ENCODE measurements at regions of chr6 and their contacts with region 1.

Region 1: GRCh38 chr6:159062564-159062945 is 17.8 kb upstream of the TAGAP start:
- DNase-seq: peak in 7 of 9 donors; percentile 75 to 89 (median 85)
- ATAC-seq: peak; percentile 92
- H3K4me3 ChIP-seq: peak overlapping the region; percentile 14
- H3K4me3 Mint-ChIP-seq: peak overlapping the region; percentile 66 to 84 (median 74)
- H3K27ac ChIP-seq: peak overlapping the region; percentile 79
- H3K27ac Mint-ChIP-seq: peak overlapping the region; percentile 96 to 99 (median 98)
- H3K4me1 ChIP-seq: peaks cover 52 to 54% of the 10 kb centered on the region in 2 donors
- H3K4me1 Mint-ChIP-seq: peaks cover 60 to 88% (median 86%) of the 10 kb centered on the region in 7 donors
- H3K27me3 ChIP-seq: no peaks in the 10 kb centered on the region
- H3K27me3 Mint-ChIP-seq: no peaks in the 10 kb centered on the region

Region 2: DNA sequence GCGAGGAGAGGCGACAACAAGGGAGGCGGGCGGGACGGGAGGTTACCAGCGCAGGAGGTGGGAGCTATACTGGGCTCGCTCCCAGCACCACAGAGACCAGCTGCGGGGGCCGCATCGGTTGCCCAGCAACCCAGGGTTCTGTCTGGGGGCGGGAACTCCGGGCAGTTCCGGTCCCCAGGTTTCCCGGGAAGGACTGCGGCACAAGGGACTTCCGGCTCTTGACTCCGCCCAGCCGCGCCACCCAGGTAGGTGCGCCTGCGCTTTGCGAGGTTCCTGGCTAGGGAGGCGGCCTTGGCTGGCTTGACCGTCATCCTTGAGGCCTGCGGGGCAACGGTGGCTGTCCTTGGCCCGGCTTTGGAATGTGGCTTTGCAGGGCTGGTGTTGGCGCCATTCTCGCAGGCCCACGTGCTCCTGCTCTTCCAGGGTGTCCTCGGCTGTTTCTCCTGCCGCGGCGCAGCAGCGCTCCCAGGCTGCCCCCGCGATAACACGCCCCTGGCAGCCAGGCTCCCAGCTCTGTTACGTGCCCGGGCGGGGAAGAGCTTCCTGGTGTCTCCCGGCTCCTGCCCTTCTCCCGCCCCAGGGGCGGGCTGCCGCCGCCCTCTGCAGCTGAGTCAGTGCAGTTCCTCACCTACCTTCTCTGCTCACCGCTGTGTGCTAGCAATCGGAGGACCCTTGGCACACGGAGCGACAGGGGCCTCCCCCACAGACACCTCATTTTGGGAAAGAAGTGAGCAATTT is 62.7 kb before region 1 on chr6 and contains the start of gene RSPH3:
- CTCF ChIA-PET with region 1: no interaction called
- POLR2A ChIA-PET with region 1: no interaction called
- intact Hi-C with region 1: loop called in 1 of 2 experiments (anchors 2 kb)
- DNase-seq: peak; percentile 64 to 93 (median 81)
- ATAC-seq: peak; percentile 93
- H3K4me3 ChIP-seq: peak within 1 kb of the TSS; percentile 97
- H3K4me3 Mint-ChIP-seq: peak within 1 kb of the TSS; percentile 88 to 99 (median 98)
- H3K27ac ChIP-seq: peak within 1 kb of the TSS; percentile 76
- H3K27ac Mint-ChIP-seq: peak within 1 kb of the TSS; percentile 58 to 95 (median 90)
- H3K4me1 ChIP-seq: peaks cover 7 to 16% of the 10 kb centered on the region in 2 donors
- H3K4me1 Mint-ChIP-seq: peaks cover 16 to 35% (median 26%) of the 10 kb centered on the region in 7 donors
- H3K27me3 ChIP-seq: no peaks in the 10 kb centered on the region
- H3K27me3 Mint-ChIP-seq: no peaks in the 10 kb centered on the region
- total RNA-seq, gene RSPH3: 1.3 to 3.6 (median 2.7) TPM

Region 3: GRCh38 chr6:159074120-159074684 is 11.6 kb after region 1 on chr6:
- CTCF ChIA-PET with region 1: interaction called, 3 read pairs
- POLR2A ChIA-PET with region 1: interaction called, 44 read pairs
- intact Hi-C with region 1: no loop called
- DNase-seq: no peak
- ATAC-seq: no peak
- H3K4me3 ChIP-seq: no peak overlapping the region
- H3K4me3 Mint-ChIP-seq: no peak overlapping the region
- H3K27ac ChIP-seq: no peak overlapping the region
- H3K27ac Mint-ChIP-seq: no peak overlapping the region
- H3K4me1 ChIP-seq: peaks cover 0 to 10% of the 10 kb centered on the region in 2 donors
- H3K4me1 Mint-ChIP-seq: peaks cover 13 to 30% (median 20%) of the 10 kb centered on the region in 7 donors
- H3K27me3 ChIP-seq: no peaks in the 10 kb centered on the region
- H3K27me3 Mint-ChIP-seq: peaks cover 0 to 9% (median 0%) of the 10 kb centered on the region in 5 donors

Region 4: GRCh38 chr6:159080217-159080976 is 17.8 kb after region 1 on chr6:
- CTCF ChIA-PET with region 1: interaction called, 3 read pairs
- POLR2A ChIA-PET with region 1: interaction called, 44 read pairs
- intact Hi-C with region 1: loop called in 1 of 2 experiments (anchors 2 kb)
- DNase-seq: no peak
- ATAC-seq: peak; percentile 63
- H3K4me3 ChIP-seq: no peak overlapping the region
- H3K4me3 Mint-ChIP-seq: peak overlapping the region in 3 of 10 donors; percentile 28 to 47 (median 32)
- H3K27ac ChIP-seq: no peak overlapping the region
- H3K27ac Mint-ChIP-seq: peak overlapping the region in 6 of 9 donors; percentile 9 to 86 (median 68)
- H3K4me1 ChIP-seq: peaks cover 8 to 22% of the 10 kb centered on the region in 2 donors
- H3K4me1 Mint-ChIP-seq: peaks cover 16 to 43% (median 29%) of the 10 kb centered on the region in 7 donors
- H3K27me3 ChIP-seq: no peaks in the 10 kb centered on the region
- H3K27me3 Mint-ChIP-seq: peaks cover 0 to 7% (median 0%) of the 10 kb centered on the region in 5 donors

Region 5: GRCh38 chr6:159098636-159099106 is 36.1 kb after region 1 on chr6:
- CTCF ChIA-PET with region 1: interaction called, 17 read pairs
- POLR2A ChIA-PET with region 1: interaction called, 61 read pairs
- intact Hi-C with region 1: loop called (anchors 1 kb)
- DNase-seq: peak; percentile 20 to 91 (median 84)
- ATAC-seq: peak; percentile 80
- H3K4me3 ChIP-seq: peak overlapping the region; percentile 32
- H3K4me3 Mint-ChIP-seq: peak overlapping the region; percentile 70 to 88 (median 83)
- H3K27ac ChIP-seq: peak overlapping the region; percentile 80
- H3K27ac Mint-ChIP-seq: peak overlapping the region; percentile 92 to 98 (median 96)
- H3K4me1 ChIP-seq: peaks cover 30 to 57% of the 10 kb centered on the region in 2 donors
- H3K4me1 Mint-ChIP-seq: peaks cover 47 to 86% (median 75%) of the 10 kb centered on the region in 7 donors
- H3K27me3 ChIP-seq: no peaks in the 10 kb centered on the region
- H3K27me3 Mint-ChIP-seq: no peaks in the 10 kb centered on the region